H1 (cell line): ENCODE measurements at regions of chr11 and their contacts with region 1.

Region 1: DNA sequence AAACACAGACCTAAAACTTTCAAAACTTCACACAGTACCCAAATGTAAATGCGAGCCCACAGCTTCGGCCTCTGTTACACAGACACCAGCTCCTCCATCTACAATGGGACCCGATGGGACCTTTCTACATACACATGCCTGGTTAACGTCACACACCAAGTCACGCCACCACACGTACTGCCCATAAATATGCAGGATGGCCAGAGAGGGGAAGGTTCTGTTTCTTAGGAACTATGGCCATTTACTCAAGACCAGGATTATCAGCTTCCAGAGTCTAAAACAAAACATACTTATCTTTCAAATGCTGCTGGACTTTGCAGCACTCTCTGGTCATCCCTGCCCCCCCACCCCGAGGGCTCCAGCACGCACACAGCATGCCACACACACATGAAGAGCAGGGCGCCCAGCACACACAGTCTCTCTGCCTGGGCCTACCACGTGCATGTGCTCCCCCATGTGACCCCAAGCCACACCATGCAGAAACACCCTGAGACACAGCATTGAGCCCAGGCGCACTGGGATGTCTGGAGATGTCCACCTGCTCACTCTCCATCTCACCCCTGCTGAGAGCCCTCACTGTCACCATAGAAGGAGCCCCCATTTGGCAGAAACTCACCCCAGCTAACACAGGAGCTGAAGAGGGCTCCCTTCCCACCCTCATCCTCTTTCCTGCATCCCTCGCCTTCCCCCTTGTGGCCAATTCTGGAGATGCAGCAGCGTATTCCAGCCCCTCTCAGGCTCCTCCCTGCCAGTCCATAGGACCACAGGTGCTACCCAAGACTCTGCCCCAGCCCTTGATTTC is 61.8 kb downstream of the SLC22A12 start:
- DNase-seq: peak; percentile 67 to 99
- H3K4me3 ChIP-seq: peak overlapping the region in 1 of 4 experiments; percentile 15; a peak in 1 of 8 replicates
- H3K27ac ChIP-seq: no peak overlapping the region
- H3K4me1 ChIP-seq: peaks cover 0 to 8% (median 5%) of the 10 kb centered on the region in 4 experiments; a peak in 3 of 7 replicates
- H3K27me3 ChIP-seq: peaks cover 0 to 5% (median 2%) of the 10 kb centered on the region in 4 experiments; a peak in 3 of 7 replicates
- CTCF ChIP-seq: peak; percentile 93 to 97 (median 94)
- EP300 ChIP-seq: no peak
- POLR2A ChIP-seq: no peak
- RAD21 ChIP-seq: peak; percentile 81 to 87

Region 2: DNA sequence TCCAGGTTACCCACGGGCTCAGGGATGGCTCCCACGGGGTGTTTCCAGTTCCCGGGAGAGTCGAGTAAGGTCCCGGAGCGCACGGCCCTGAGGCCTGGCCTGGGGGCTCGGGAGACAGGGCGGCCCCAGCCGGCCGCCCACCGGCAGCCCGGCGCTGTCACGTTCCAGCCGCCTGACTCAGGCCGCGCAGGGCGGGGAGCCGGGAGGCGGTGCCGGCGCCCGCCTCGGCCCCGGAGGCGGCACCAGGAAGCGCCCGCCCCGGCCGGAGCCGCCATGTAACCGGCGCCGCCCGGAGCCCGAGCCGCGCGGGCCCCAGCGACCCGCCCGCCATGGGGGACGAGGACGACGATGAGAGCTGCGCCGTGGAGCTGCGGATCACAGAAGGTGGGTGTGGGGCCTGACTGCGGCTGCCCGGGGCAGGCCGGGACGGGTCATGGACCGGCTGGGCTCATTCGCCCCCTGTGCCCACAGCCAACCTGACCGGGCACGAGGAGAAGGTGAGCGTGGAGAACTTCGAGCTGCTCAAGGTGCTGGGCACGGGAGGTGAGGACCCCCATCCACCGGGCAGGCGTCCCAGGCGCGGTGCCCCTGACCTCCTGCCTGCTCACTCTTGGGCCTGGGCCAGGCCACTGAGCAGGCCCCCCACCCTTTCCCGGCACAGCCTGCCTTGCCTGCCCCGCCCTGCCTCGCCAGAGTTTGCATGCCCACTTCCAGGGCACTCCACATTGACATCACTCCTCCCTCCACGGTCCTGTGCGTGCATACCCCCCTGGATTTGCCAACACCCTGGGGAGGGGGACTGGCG is 293.7 kb before region 1 on chr11 and contains the start of gene RPS6KA4:
- CTCF ChIA-PET with region 1: interaction called, 13 read pairs
- POLR2A ChIA-PET with region 1: no interaction called
- DNase-seq: peak in 1 of 2 experiments; percentile 75
- H3K4me3 ChIP-seq: peak within 1 kb of the TSS; percentile 61 to 83 (median 72)
- H3K27ac ChIP-seq: no peak within 1 kb of the TSS; the same call in 1 of the 2 replicates
- H3K4me1 ChIP-seq: peaks cover 0 to 39% (median 30%) of the 10 kb centered on the region in 4 experiments; a peak in 6 of 7 replicates
- H3K27me3 ChIP-seq: no peaks in the 10 kb centered on the region
- CTCF ChIP-seq: no peak
- EP300 ChIP-seq: no peak
- POLR2A ChIP-seq: no peak
- RAD21 ChIP-seq: no peak
- total RNA-seq, gene RPS6KA4: 12.6 and 13.2 TPM in 2 replicates

Region 3: DNA sequence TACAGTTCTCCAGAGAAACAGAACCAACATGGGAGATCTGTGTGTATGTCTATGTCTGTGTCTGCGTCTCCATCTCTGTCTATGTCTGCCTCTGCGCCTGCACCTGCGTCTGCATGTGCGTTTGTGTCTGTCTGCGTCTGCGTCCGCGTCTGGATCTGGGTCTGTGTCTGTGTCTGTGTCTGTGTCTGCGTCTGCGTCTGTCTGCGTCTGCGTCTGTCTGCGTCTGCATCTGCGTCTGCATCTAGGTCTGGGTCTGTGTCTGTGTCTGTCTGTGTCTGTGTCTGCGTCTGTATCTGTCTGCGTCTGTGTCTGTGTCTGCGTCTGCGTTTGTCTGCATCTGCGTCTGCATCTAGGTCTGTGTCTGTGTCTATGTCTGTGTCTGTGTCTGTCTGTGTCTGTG is 150.2 kb before region 1 on chr11:
- CTCF ChIA-PET with region 1: interaction called, 20 read pairs
- POLR2A ChIA-PET with region 1: no interaction called
- DNase-seq: no peak
- H3K4me3 ChIP-seq: no peak overlapping the region
- H3K27ac ChIP-seq: no peak overlapping the region
- H3K4me1 ChIP-seq: no peaks in the 10 kb centered on the region
- H3K27me3 ChIP-seq: peaks cover 0 to 28% (median 8%) of the 10 kb centered on the region in 4 experiments; a peak in 6 of 7 replicates
- CTCF ChIP-seq: no peak
- EP300 ChIP-seq: no peak
- POLR2A ChIP-seq: no peak
- RAD21 ChIP-seq: no peak

Region 4: DNA sequence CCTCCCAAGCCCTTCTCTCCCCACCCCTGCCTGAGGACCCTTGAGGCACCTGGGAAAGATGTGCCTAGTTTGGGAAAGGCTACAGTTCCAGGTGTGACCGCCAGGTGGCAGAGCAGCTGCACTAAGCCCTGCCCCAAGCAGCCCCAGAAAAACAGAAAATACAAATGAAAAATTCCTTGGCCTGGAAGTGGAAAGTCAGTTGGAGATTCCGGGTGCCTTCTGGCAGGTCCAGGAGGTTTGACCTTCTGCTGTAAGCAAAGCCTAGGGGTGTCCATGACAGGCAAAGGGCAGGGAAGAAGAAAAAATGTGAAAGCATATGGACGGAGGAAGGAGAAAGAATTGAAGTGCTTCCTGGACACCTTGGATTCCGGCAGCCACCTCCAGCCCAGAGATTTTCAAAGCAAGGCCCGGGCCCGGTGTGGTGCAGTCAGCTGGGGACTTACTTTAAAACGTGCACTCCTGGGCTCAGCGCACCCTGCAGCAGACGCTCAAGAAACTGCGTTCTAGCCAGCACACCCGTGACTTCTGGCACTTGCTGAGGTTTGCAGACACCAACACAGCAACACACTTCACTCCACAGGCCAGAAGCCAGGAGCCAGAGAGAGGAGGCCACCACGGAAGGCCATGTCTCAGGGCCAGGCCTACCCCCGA is 99.1 kb before region 1 on chr11:
- CTCF ChIA-PET with region 1: interaction called, 84 read pairs
- POLR2A ChIA-PET with region 1: interaction called, 3 read pairs
- DNase-seq: peak in 1 of 2 experiments; percentile 92
- H3K4me3 ChIP-seq: no peak overlapping the region
- H3K27ac ChIP-seq: no peak overlapping the region
- H3K4me1 ChIP-seq: peaks cover 0 to 8% (median 6%) of the 10 kb centered on the region in 4 experiments; a peak in 6 of 7 replicates
- H3K27me3 ChIP-seq: no peaks in the 10 kb centered on the region; a peak in 3 of 7 replicates
- CTCF ChIP-seq: peak; percentile 90 to 96 (median 90)
- EP300 ChIP-seq: no peak
- POLR2A ChIP-seq: no peak
- RAD21 ChIP-seq: peak; percentile 91 to 93

Region 5: GRCh38 chr11:64608046-64608445 is 44.7 kb before region 1 on chr11:
- CTCF ChIA-PET with region 1: interaction called, 26 read pairs
- POLR2A ChIA-PET with region 1: no interaction called
- DNase-seq: no peak
- H3K4me3 ChIP-seq: no peak overlapping the region
- H3K27ac ChIP-seq: no peak overlapping the region
- H3K4me1 ChIP-seq: peaks cover 0 to 6% (median 0%) of the 10 kb centered on the region in 4 experiments; a peak in 1 of 7 replicates
- H3K27me3 ChIP-seq: no peaks in the 10 kb centered on the region; a peak in 2 of 7 replicates
- CTCF ChIP-seq: no peak
- EP300 ChIP-seq: no peak
- POLR2A ChIP-seq: no peak
- RAD21 ChIP-seq: no peak

Region 6: DNA sequence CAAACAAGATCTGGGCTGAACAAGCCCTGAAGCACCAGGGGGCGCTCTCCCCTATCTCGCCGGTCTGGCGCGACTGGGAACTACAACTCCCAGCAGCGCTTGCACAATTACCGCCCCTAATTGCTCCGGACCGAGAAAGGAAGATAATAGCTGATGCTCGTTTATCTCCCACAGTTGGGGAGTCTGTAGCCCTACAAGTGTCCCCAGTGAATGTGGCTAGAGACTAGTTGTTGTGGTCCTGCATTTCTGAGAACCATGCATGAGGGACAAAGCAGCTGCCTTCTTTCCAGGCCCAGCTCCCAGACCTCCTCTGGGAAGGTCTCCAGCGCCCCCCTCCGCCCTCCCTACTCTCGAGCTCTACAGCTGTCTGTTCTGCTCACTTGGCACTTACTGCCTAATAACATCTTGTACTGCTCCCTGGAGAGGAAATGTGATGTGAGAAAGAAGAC is 35.8 kb after region 1 on chr11:
- CTCF ChIA-PET with region 1: interaction called, 34 read pairs
- POLR2A ChIA-PET with region 1: no interaction called
- DNase-seq: peak; percentile 90 to 99
- H3K4me3 ChIP-seq: peak overlapping the region; percentile 50 to 83 (median 80); a peak in 7 of 8 replicates
- H3K27ac ChIP-seq: no peak overlapping the region
- H3K4me1 ChIP-seq: peaks cover 0 to 4% (median 0%) of the 10 kb centered on the region in 4 experiments; a peak in 2 of 7 replicates
- H3K27me3 ChIP-seq: no peaks in the 10 kb centered on the region
- CTCF ChIP-seq: peak; percentile 85 to 98 (median 92)
- EP300 ChIP-seq: no peak
- POLR2A ChIP-seq: no peak
- RAD21 ChIP-seq: peak; percentile 63 to 69

Region 7: DNA sequence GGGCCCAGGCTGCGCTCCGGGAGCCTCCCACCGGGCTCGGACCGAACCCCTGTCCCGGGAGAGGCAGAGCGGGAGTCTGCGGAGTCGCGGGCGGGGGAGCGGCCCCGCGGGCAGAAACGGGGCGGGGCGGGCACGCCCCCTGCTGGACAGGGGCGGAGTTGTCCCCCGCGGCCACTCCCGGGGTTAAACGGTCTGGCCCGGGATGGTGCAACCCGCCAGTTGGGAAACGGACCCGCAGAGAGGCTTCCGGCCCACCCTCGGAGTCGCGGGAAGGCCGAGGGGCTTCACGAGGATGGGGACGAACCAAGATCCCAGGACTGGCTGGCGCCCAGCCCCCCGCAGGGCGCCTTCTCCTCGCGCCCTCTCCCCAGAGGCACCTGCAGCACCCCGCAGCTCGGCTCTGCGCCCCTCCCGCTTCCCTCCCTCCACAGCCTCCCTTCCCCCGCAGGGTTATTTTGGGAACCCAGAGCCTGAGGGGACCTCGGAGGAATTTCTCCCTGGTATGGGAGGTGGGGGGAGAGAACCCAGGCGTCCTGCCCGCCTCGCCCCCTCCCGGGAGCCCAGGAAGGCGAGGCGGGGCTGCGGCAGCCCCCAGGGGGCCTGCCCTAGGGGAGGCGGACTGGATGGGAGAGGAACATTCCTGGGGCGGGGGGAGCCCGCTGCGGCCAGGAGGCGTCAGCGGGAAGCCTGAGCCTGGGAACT is 90.3 kb after region 1 on chr11:
- CTCF ChIA-PET with region 1: interaction called, 27 read pairs
- POLR2A ChIA-PET with region 1: no interaction called
- DNase-seq: peak in 1 of 2 experiments; percentile 94
- H3K4me3 ChIP-seq: peak overlapping the region; percentile 46 to 67 (median 57)
- H3K27ac ChIP-seq: no peak overlapping the region
- H3K4me1 ChIP-seq: peaks cover 4 to 33% (median 29%) of the 10 kb centered on the region in 4 experiments
- H3K27me3 ChIP-seq: peaks cover 0 to 32% (median 19%) of the 10 kb centered on the region in 4 experiments; a peak in 5 of 7 replicates
- CTCF ChIP-seq: peak in 2 of 3 experiments; percentile 74; a peak in 3 of 4 replicates
- EP300 ChIP-seq: no peak
- POLR2A ChIP-seq: 0 out of 3 replicates have a peak, but pooled peaks of 1 of the 2 experiments have one; percentile 14
- RAD21 ChIP-seq: peak; percentile 56 to 74

Region 8: DNA sequence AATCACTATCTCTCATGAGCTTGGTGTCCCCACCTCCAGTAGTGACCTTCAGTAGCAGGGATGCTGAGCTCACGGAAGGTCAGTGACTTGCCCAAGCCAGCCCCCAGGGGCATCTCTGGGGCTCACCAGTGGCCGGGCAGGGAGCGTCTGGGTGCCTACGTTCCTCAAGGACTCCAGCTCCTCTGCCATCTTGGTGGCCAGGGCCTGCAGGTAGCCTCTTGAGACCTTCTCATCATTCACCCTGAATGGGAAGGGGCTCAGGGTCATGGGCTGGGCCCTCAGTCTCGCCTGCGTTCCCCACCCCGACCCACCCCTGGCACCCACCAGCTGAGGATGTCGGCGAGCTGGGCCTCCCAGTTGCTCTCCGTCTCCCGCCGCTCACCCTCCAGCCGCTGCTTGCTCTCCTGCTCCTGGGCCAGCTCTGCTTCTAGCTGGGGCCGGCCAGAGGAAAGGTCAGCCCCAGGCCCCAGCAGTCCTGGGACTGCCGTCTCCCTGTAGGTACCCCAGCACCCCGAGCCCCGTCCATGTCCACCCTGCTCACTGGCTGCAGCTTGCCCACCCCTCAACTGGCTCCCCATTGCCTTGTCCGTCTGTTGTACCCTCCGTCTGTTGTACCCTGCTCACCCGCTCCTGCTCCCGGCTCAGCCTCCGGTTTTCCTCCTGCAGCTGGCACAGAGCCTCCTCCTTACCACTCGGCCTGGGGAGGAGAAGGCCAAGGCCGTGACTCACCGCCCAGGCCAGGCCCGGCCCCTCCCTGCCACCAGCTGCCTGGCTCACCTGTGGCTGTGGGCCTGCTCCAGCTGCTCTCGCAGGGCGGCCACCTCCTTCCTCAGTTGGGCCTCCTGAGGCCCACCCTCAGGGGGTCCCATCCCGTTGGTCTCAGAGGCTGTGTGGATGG is 182.2 kb after region 1 on chr11:
- CTCF ChIA-PET with region 1: no interaction called
- POLR2A ChIA-PET with region 1: no interaction called
- DNase-seq: no peak
- H3K4me3 ChIP-seq: no peak overlapping the region
- H3K27ac ChIP-seq: no peak overlapping the region
- H3K4me1 ChIP-seq: no peaks in the 10 kb centered on the region; a peak in 1 of 7 replicates
- H3K27me3 ChIP-seq: no peaks in the 10 kb centered on the region
- CTCF ChIP-seq: no peak
- EP300 ChIP-seq: no peak
- POLR2A ChIP-seq: no peak
- RAD21 ChIP-seq: no peak

Region 9: GRCh38 chr11:64900263-64900678 is 247.5 kb after region 1 on chr11:
- CTCF ChIA-PET with region 1: no interaction called
- POLR2A ChIA-PET with region 1: no interaction called
- DNase-seq: no peak
- H3K4me3 ChIP-seq: no peak overlapping the region
- H3K27ac ChIP-seq: no peak overlapping the region
- H3K4me1 ChIP-seq: no peaks in the 10 kb centered on the region
- H3K27me3 ChIP-seq: no peaks in the 10 kb centered on the region
- CTCF ChIP-seq: no peak
- EP300 ChIP-seq: no peak
- POLR2A ChIP-seq: no peak
- RAD21 ChIP-seq: no peak